Mammary epithelial cell (primary cell): ENCODE measurements at regions of chr16 and their contacts with region 1.

Region 1: GRCh38 chr16:19020689-19021088 is 37.0 kb downstream of the TMC7 start:
- DNase-seq: no peak
- H3K4me3 ChIP-seq: no peak overlapping the region
- H3K27ac ChIP-seq: no peak overlapping the region
- H3K4me1 ChIP-seq: no peaks in the 10 kb centered on the region
- H3K27me3 ChIP-seq: no peaks in the 10 kb centered on the region
- CTCF ChIP-seq: no peak

Region 2: DNA sequence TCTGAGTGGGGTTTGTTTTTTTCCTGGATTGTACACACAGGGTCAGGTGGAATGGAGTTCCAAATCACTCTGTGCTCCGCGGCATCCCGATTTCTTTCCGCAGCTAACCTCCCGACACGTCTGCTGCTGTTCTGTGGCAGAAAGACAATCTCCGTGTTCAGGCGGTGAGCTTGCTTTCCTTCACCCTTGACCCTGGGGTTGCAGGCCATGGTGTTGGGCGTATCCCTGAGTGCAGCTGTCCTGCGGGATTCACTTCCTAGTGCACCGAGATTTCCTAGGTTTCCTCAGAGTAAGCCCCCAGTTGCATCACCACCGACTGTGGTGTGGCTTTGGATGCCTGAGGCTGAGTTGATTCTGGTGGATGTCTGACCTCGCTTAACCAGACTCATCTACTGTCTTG is 211.5 kb before region 1 on chr16:
- CTCF ChIA-PET with region 1: no interaction called
- dilution Hi-C with region 1: loop called (anchors 5 kb)
- in situ Hi-C with region 1: no loop called
- intact Hi-C with region 1: no loop called
- DNase-seq: no peak
- H3K4me3 ChIP-seq: no peak overlapping the region
- H3K27ac ChIP-seq: no peak overlapping the region
- H3K4me1 ChIP-seq: peaks cover 8% of the 10 kb centered on the region
- H3K27me3 ChIP-seq: no peaks in the 10 kb centered on the region
- CTCF ChIP-seq: no peak

Region 3: DNA sequence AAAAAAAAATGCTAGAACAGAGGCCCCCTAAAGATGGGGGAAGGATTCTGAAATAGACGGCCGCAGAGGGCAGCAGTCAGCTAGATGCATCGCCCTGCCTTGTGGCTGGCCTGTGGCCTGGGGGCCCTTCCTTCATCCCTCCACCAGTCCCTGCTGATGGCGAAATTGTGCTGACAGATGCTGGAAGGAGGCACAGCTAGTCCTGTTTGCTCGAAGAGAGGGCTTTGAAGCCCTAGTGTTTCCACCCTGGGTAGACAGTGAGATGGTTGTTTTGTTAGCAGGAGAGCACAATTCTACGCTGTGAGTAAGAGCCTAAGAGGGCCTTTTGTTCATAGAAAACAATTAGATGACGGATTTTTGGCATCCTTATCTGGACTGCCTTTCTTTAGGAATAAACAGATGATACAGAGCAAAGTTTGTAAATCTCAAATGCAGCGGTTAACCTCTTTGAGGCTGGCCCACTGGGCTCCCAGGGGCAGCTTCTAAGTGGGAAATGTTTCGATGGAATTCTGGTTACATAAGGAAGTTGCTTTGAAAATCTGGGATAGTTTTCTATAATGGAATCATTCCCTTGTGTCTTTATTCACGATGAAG is 557.8 kb after region 1 on chr16:
- CTCF ChIA-PET with region 1: no interaction called
- dilution Hi-C with region 1: no loop called
- in situ Hi-C with region 1: no loop called
- intact Hi-C with region 1: no loop called
- DNase-seq: no peak
- H3K4me3 ChIP-seq: no peak overlapping the region
- H3K27ac ChIP-seq: no peak overlapping the region
- H3K4me1 ChIP-seq: no peaks in the 10 kb centered on the region
- H3K27me3 ChIP-seq: no peaks in the 10 kb centered on the region
- CTCF ChIP-seq: no peak